Uterus (tissue), 4 donors: ENCODE measurements at regions of chr6 and their contacts with region 1.

Region 1: DNA sequence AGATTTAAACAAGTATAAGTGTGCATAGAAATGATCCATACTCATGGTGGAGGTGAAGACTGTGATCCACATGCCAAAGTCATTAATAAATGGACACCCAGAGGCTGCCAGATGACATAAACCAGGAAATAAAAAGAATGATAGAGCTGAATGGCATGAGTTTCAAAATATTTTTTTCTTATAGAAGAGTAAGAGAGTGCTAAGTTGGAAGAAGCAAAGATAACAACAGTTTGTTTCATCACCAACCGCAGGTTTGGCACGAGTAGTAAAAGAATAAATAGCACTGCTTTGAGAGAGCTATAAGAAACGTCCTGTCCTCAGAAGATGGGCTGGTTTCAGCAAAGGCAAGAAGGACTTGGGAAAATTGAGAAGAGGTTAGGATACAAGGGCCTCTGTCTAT is 246.9 kb downstream of the UBE3D start:
- DNase-seq: no peak
- H3K4me3 ChIP-seq: no peak overlapping the region
- H3K27ac ChIP-seq: no peak overlapping the region
- H3K4me1 ChIP-seq: no peaks in the 10 kb centered on the region
- H3K27me3 ChIP-seq: no peaks in the 10 kb centered on the region
- CTCF ChIP-seq: no peak
- POLR2A ChIP-seq: no peak

Region 2: GRCh38 chr6:82750556-82750955 is 68.2 kb before region 1 on chr6:
- intact Hi-C with region 1: loop called (anchors 10 kb)
- DNase-seq: no peak
- H3K4me3 ChIP-seq: no peak overlapping the region
- H3K27ac ChIP-seq: no peak overlapping the region
- H3K4me1 ChIP-seq: no peaks in the 10 kb centered on the region
- H3K27me3 ChIP-seq: no peaks in the 10 kb centered on the region
- CTCF ChIP-seq: no peak
- POLR2A ChIP-seq: no peak